Activated naive CD8-positive, alpha-beta T cell treated with anti-CD3 and anti-CD28 coated beads, Interleukin-2, amount 10 ng/mL, durations not matched to agents 7 days and 5 days (primary cell): ENCODE measurements at regions of chr17 and their contacts with region 1.

Region 1: DNA sequence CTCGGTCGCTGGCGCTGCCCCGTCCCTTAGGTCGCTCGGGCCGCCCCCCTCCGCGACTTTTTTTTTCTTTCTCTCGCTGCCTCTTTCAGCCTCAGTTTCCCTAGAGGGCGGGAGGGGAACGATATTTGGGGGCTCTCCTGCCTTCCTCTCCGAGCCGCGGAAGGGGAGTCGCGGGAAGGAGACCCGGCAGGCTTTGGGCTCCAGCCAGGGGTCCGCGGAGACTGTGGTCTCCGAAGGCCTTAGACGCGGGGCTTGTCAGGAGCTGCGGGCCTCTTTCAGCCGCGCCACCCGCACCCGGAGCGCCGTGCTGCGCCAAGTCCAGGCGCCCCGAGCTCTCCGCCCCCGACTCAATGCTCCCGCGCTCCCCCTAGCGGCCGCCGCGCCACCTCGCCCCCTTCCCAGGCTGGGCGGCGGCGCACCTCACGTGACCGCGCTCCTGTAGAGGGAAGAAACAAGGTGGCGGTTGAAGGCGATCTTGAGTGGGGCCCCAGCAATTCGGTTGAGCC is at the start of gene LRRC37B:
- DNase-seq: peak; percentile 95
- ATAC-seq: peak; percentile 89
- H3K4me3 Mint-ChIP-seq: peak within 1 kb of the TSS; percentile 84
- H3K27ac Mint-ChIP-seq: peak within 1 kb of the TSS; percentile 85
- H3K4me1 Mint-ChIP-seq: peaks cover 24% of the 10 kb centered on the region
- H3K27me3 Mint-ChIP-seq: peaks cover 6% of the 10 kb centered on the region
- total RNA-seq, gene LRRC37B: 51.5 to 58.3 TPM

Region 2: DNA sequence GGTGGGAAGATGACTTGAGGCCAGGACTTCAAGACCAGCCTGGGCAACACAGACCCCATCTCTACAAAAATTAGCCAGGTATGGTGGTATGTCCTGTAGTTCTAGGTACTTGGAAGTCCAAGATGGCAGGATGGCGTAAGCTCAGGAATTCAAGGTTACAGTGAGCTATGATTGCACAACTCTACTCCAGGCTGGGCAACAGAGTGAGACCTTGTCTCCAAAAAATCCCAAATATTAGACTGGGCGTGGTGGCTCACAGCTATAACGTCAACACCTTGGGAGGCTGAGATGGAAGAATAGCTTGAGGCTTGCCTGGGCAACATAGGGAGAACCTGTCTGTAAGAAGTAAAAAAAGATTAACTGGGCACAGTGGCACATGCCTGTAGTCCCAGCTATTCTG is 39.4 kb before region 1 on chr17:
- POLR2A ChIA-PET with region 1: no interaction called
- DNase-seq: no peak
- ATAC-seq: no peak
- H3K4me3 Mint-ChIP-seq: no peak overlapping the region
- H3K27ac Mint-ChIP-seq: no peak overlapping the region
- H3K4me1 Mint-ChIP-seq: peaks cover 3% of the 10 kb centered on the region
- H3K27me3 Mint-ChIP-seq: no peaks in the 10 kb centered on the region

Region 3: GRCh38 chr17:32103476-32104113 is 96.6 kb after region 1 on chr17:
- POLR2A ChIA-PET with region 1: interaction called, 11 read pairs
- DNase-seq: no peak
- ATAC-seq: peak; percentile 15
- H3K4me3 Mint-ChIP-seq: peak overlapping the region; percentile 78
- H3K27ac Mint-ChIP-seq: peak overlapping the region; percentile 94
- H3K4me1 Mint-ChIP-seq: peaks cover 38% of the 10 kb centered on the region
- H3K27me3 Mint-ChIP-seq: no peaks in the 10 kb centered on the region

Region 4: GRCh38 chr17:32127158-32127897 is 120.3 kb after region 1 on chr17:
- POLR2A ChIA-PET with region 1: interaction called, 27 read pairs
- DNase-seq: peak; percentile 86
- ATAC-seq: peak; percentile 100
- H3K4me3 Mint-ChIP-seq: peak overlapping the region; percentile 96
- H3K27ac Mint-ChIP-seq: peak overlapping the region; percentile 100
- H3K4me1 Mint-ChIP-seq: peaks cover 26% of the 10 kb centered on the region
- H3K27me3 Mint-ChIP-seq: peaks cover 2% of the 10 kb centered on the region

Region 5: DNA sequence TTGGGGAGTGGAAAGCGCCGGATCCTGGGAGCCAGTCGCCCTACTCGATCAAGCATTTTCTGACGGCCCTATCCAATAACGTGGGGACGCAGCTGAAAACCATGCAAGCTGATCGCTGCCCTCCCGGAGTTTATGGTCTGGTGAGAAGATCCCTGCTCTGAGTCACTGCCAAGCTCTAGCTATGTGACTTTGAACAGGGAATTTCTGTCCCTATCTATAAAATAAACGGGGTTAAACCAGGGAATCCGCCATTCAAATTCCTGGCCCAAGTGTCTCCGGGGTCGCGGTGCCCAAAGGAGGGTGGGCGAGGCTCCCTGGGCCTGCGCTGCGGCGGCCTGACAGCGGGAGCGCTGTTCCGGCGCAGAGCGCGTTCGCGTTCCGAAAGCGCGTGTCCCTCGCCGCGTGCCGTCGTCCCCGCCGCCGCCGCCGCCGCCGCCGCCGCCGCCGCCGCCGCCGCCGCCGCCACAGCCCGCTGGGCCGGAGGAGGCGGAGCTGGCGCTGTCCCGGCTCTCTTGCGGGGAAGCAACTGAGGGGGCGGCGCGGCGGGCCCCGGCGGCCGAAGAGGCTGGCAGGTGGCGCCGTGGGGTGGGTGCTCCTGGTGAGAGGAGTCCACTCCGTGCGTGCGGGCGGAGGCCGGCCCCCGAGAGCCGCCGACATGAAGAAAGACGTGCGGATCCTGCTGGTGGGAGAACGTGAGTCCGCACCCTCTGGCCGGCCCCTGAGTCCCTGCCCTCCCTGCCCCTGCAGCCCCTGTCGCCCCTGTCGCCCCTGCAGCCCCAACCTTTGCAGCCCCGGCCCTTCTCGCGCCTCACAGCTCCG is 135.2 kb after region 1 on chr17 and contains the start of gene RHOT1:
- POLR2A ChIA-PET with region 1: interaction called, 18 read pairs
- DNase-seq: peak; percentile 88
- ATAC-seq: peak; percentile 69
- H3K4me3 Mint-ChIP-seq: peak within 1 kb of the TSS; percentile 100
- H3K27ac Mint-ChIP-seq: peak within 1 kb of the TSS; percentile 90
- H3K4me1 Mint-ChIP-seq: peaks cover 23% of the 10 kb centered on the region
- H3K27me3 Mint-ChIP-seq: no peaks in the 10 kb centered on the region
- total RNA-seq, gene RHOT1: 29.8 to 30.0 TPM